Activated CD4-positive, alpha-beta T cell treated with anti-CD3 and anti-CD28 coated beads for 36 hours (primary cell): ENCODE measurements at regions of chr3 and their contacts with region 1.

Region 1: GRCh38 chr3:122383771-122384697 is at the start of gene FAM162A:
- DNase-seq: peak; percentile 97
- ATAC-seq: peak; percentile 91
- H3K4me3 Mint-ChIP-seq: peak within 1 kb of the TSS; percentile 92
- H3K27ac Mint-ChIP-seq: peak within 1 kb of the TSS; percentile 98
- H3K4me1 Mint-ChIP-seq: peaks cover 66% of the 10 kb centered on the region
- H3K27me3 Mint-ChIP-seq: no peaks in the 10 kb centered on the region
- total RNA-seq, gene FAM162A: 163 to 181 TPM

Region 2: DNA sequence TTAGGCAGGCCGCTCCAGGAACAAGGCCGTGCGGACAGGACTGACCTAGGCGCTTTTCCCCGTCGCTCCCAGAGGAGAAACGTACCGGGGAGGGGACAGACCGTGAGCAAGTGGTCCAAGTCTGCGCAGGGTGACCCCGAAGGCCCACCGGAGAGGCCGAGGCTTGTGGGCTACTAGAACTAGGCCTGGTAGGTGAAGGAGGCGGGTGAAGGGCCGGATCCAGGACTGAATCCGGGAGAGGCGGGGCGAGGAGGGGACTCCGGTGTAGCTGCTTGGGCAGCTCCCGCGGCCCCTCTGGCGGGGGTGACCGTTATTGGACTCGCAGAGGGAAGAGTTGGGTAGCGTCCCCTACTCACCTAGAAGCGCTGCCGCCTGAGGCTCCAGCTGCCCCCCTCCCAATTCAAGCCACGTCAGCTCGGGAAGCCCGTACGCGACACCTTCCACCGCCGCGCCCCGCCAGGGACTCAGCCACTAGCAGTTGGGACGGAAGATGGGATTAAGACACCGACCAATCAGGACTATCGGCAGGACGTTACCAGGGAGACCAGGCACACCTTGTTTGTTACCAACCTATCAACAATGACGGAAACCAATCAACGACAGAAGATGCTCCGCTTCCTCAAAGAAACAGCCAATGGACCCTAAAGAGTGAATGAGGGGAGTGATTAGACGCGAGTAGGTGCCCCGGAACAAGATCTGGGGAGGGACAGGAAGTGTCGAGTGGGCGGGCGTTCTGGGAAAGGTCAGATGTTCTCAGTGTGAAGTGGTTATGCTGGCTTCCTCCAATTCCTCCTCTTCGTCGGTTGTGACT is 634.6 kb before region 1 on chr3 and contains the start of gene GOLGB1:
- CTCF ChIA-PET with region 1: no interaction called
- POLR2A ChIA-PET with region 1: no interaction called
- intact Hi-C with region 1: loop called in 1 of 2 experiments (anchors 1 kb)
- DNase-seq: peak; percentile 96
- ATAC-seq: peak; percentile 98
- H3K4me3 Mint-ChIP-seq: no peak within 1 kb of the TSS
- H3K27ac Mint-ChIP-seq: peak within 1 kb of the TSS; percentile 60
- H3K4me1 Mint-ChIP-seq: peaks cover 10% of the 10 kb centered on the region
- H3K27me3 Mint-ChIP-seq: no peaks in the 10 kb centered on the region
- total RNA-seq, gene GOLGB1: 19.0 to 19.5 TPM

Region 3: DNA sequence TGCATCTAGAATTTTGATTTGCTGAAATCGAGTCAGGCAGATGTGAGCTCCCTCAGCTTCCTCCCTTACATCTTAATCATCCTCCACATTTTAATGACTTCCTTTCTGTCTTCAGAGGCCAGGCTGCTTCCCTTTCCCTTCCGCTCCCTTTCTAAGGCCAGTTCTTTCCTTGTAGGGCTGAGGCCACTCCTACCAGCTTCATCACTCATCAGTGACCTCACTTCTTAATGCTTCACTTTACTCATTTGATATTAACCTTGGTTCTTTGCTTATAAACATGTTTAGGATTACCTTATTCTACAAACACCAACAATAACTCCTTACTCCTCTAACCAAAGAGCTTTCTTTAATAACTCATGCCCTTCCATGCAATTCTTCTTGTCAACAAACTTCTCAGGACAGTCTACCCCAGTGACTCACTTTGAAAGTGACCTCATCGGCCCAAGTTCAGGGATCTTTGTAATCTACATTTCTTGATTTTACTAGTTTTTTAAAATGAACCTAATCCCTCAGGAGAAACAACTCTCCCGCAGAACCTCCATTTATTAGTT is 385.9 kb before region 1 on chr3:
- CTCF ChIA-PET with region 1: no interaction called
- POLR2A ChIA-PET with region 1: no interaction called
- intact Hi-C with region 1: no loop called
- DNase-seq: peak; percentile 16
- ATAC-seq: peak; percentile 52
- H3K4me3 Mint-ChIP-seq: no peak overlapping the region
- H3K27ac Mint-ChIP-seq: peak overlapping the region; percentile 48
- H3K4me1 Mint-ChIP-seq: peaks cover 26% of the 10 kb centered on the region
- H3K27me3 Mint-ChIP-seq: peaks cover 8% of the 10 kb centered on the region

Region 4: GRCh38 chr3:122146466-122146865 is 237.6 kb before region 1 on chr3:
- CTCF ChIA-PET with region 1: no interaction called
- POLR2A ChIA-PET with region 1: interaction called, 4 read pairs
- intact Hi-C with region 1: loop called in 1 of 2 experiments (anchors 1 kb)
- DNase-seq: peak; percentile 88
- ATAC-seq: peak; percentile 99
- H3K4me3 Mint-ChIP-seq: no peak overlapping the region
- H3K27ac Mint-ChIP-seq: peak overlapping the region; percentile 83
- H3K4me1 Mint-ChIP-seq: peaks cover 32% of the 10 kb centered on the region
- H3K27me3 Mint-ChIP-seq: peaks cover 2% of the 10 kb centered on the region

Region 5: DNA sequence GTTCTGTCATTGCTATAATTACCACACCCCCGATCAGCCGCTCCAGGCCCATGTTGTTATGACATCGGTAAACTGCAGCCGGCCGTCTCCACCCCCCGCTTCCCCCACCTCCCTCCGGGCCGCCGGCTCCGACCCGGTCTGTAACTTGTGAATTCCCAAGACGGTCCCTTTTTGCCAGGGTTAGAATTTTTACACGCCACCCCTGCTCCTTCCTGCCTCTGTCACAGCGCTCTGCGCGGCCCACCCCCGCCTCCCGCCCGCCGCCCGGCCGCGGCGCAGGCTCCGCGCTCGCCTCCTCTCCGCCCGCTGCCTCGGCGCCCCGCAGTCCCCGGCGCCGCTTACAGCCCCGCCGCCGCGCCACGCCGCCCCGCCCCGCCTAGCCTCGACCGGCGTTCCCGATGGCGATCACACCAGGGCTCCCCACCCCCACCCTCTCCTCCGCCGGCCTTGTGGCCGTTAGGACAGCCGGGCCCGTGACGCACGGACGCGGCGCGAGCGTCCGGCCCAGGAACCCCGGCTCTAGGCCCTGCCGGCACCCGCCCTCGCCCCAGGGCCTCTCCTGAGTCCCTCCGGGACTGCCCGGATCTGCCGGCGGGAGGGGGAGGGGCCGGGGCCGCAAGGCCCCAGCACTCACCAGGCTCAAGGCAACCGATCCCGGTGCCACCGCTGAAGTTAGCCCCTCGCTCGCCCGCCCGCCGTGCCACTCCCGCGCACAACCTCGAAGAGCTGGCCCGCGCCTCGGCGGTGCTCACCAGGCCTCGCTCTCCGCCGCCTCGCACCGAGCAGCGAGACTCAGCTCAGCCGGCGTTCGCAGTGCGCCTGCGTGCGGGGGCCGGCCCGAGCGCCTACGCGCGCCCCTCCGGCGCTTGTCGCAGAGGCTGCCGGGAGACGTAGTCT is 130.3 kb after region 1 on chr3 and contains the start of gene KPNA1:
- CTCF ChIA-PET with region 1: interaction called, 3 read pairs
- POLR2A ChIA-PET with region 1: interaction called, 6 read pairs
- intact Hi-C with region 1: loop called in 1 of 2 experiments (anchors 1 kb)
- DNase-seq: peak; percentile 93
- ATAC-seq: peak; percentile 93
- H3K4me3 Mint-ChIP-seq: peak within 1 kb of the TSS; percentile 77
- H3K27ac Mint-ChIP-seq: peak within 1 kb of the TSS; percentile 84
- H3K4me1 Mint-ChIP-seq: peaks cover 39% of the 10 kb centered on the region
- H3K27me3 Mint-ChIP-seq: no peaks in the 10 kb centered on the region
- total RNA-seq, gene KPNA1: 37.5 to 42.6 TPM

Region 6: DNA sequence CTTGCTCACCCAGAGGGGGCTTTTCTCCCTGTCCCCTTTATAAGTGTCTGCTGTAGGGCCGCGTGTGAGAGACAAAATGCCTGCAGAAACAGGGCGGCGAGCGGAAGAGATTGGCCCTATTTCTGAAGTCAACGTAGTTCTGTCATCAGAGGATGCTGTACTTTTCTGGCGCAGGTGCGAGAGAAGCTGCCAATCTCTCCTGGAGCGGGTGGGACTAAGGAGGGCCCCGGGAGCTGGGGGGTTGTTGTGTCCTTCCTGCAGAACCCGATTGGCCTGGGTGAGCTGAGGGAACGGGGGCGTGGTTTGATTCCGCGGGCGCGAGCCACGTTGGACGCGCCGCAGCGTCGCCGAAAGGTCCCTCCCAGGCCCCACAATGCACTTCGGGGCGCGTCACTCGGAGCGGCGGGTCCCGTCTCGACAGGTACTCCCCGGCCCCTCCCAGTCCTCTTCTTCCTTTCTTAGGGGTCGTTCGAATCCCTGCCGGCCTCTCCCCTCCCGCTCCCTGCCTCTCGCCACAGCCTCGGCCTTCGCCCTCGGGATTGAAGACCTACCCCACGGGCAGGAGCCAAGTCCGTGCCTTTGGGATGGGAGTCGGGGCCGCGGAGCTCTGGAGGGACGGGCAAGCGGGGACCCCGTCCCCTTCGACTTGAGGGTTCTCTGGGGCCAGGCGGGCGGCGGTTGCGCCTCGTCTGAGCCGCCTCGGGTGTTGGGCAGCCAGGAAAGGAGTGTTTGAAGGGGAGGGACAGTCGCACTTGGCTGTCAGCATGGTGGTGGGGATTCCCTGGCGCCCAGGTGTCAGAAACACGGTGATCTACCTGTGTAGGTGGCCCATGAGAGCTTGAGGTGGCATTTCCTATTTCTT is 817.8 kb after region 1 on chr3 and contains the start of gene SEC22A:
- CTCF ChIA-PET with region 1: no interaction called
- POLR2A ChIA-PET with region 1: no interaction called
- intact Hi-C with region 1: loop called in 1 of 2 experiments (anchors 5 kb)
- DNase-seq: peak; percentile 98
- ATAC-seq: peak; percentile 99
- H3K4me3 Mint-ChIP-seq: peak within 1 kb of the TSS; percentile 96
- H3K27ac Mint-ChIP-seq: peak within 1 kb of the TSS; percentile 97
- H3K4me1 Mint-ChIP-seq: peaks cover 28% of the 10 kb centered on the region
- H3K27me3 Mint-ChIP-seq: no peaks in the 10 kb centered on the region
- total RNA-seq, gene SEC22A: 13.2 to 16.3 TPM